ENCODE measurements at regions of chr2 and their contacts with region 1.

Region 1: GRCh38 chr2:111897924-111898702 is at the start of gene MERTK:
- DNase-seq: peak; percentile 89
- ATAC-seq: peak; percentile 91
- H3K4me3 ChIP-seq: peak within 1 kb of the TSS; percentile 90 to 99 (median 94)
- H3K27ac ChIP-seq: peak within 1 kb of the TSS; percentile 82
- H3K4me1 ChIP-seq: peaks cover 61% of the 10 kb centered on the region
- H3K27me3 ChIP-seq: no peaks in the 10 kb centered on the region; a peak in 1 of 5 replicates
- CTCF ChIP-seq: peak; percentile 96
- EP300 ChIP-seq: no peak; a peak in 1 of 4 replicates
- POLR2A ChIP-seq: peak; percentile 90 to 92
- RAD21 ChIP-seq: peak; percentile 98
- total RNA-seq, gene MERTK: 22.5 and 37.3 TPM in 2 replicates

Region 2: GRCh38 chr2:111910609-111911277 is 12.6 kb after region 1 on chr2:
- CTCF ChIA-PET with region 1: no interaction called
- POLR2A ChIA-PET with region 1: interaction called, 18 read pairs
- in situ Hi-C with region 1: no loop called
- intact Hi-C with region 1: loop called (anchors 1 kb)
- DNase-seq: no peak
- ATAC-seq: no peak
- H3K4me3 ChIP-seq: no peak overlapping the region
- H3K27ac ChIP-seq: peak overlapping the region; percentile 43
- H3K4me1 ChIP-seq: peaks cover 73% of the 10 kb centered on the region
- H3K27me3 ChIP-seq: no peaks in the 10 kb centered on the region
- CTCF ChIP-seq: no peak
- EP300 ChIP-seq: no peak
- POLR2A ChIP-seq: no peak
- RAD21 ChIP-seq: no peak

Region 3: GRCh38 chr2:111938392-111938791 is 40.3 kb after region 1 on chr2:
- CTCF ChIA-PET with region 1: no interaction called
- POLR2A ChIA-PET with region 1: interaction called, 4 read pairs
- in situ Hi-C with region 1: no loop called
- intact Hi-C with region 1: loop called (anchors 2 kb)
- DNase-seq: no peak
- ATAC-seq: no peak
- H3K4me3 ChIP-seq: no peak overlapping the region
- H3K27ac ChIP-seq: no peak overlapping the region
- H3K4me1 ChIP-seq: peaks cover 37% of the 10 kb centered on the region
- H3K27me3 ChIP-seq: no peaks in the 10 kb centered on the region
- CTCF ChIP-seq: no peak
- EP300 ChIP-seq: no peak
- POLR2A ChIP-seq: no peak
- RAD21 ChIP-seq: no peak

Region 4: DNA sequence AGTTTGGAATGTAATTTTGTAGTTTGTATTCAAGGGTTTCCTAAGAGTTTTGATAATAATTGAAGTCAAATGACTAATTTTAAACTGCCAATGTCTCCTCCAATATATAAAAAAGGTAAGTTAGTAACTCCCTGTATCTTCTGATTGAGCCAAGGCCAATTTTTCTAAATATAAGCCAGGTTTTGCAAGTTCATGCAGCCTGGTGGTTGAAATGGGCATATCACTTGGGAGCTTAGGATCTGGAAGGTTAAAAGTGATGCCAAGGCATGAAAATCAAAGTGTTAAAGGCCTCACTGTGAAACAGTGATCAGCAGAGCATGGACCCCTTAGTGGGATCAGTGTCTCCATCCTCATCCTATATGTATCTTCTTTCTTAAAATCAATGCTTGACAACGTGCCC is 60.8 kb after region 1 on chr2:
- CTCF ChIA-PET with region 1: no interaction called
- POLR2A ChIA-PET with region 1: interaction called, 3 read pairs
- in situ Hi-C with region 1: no loop called
- intact Hi-C with region 1: loop called (anchors 2 kb)
- DNase-seq: no peak
- ATAC-seq: no peak
- H3K4me3 ChIP-seq: no peak overlapping the region
- H3K27ac ChIP-seq: no peak overlapping the region
- H3K4me1 ChIP-seq: peaks cover 70% of the 10 kb centered on the region
- H3K27me3 ChIP-seq: no peaks in the 10 kb centered on the region
- CTCF ChIP-seq: no peak
- EP300 ChIP-seq: no peak
- POLR2A ChIP-seq: no peak
- RAD21 ChIP-seq: no peak

Region 5: GRCh38 chr2:112048887-112049286 is 150.8 kb after region 1 on chr2:
- CTCF ChIA-PET with region 1: interaction called, 5 read pairs
- POLR2A ChIA-PET with region 1: interaction called, 29 read pairs
- in situ Hi-C with region 1: loop called (anchors 5 kb)
- intact Hi-C with region 1: loop called (anchors 1 kb)
- DNase-seq: peak; percentile 71
- ATAC-seq: no peak
- H3K4me3 ChIP-seq: peak overlapping the region in 1 of 3 experiments; percentile 49; a peak in 1 of 6 replicates
- H3K27ac ChIP-seq: no peak overlapping the region
- H3K4me1 ChIP-seq: peaks cover 39% of the 10 kb centered on the region
- H3K27me3 ChIP-seq: no peaks in the 10 kb centered on the region; a peak in 1 of 5 replicates
- CTCF ChIP-seq: peak; percentile 70
- EP300 ChIP-seq: no peak
- POLR2A ChIP-seq: no peak
- RAD21 ChIP-seq: no peak

Measured in HepG2 (cell line).